Activated CD8-positive, alpha-beta T cell treated with anti-CD3 and anti-CD28 coated beads for 36 hours (primary cell): ENCODE measurements at regions of chr7 and their contacts with region 1.

Region 1: DNA sequence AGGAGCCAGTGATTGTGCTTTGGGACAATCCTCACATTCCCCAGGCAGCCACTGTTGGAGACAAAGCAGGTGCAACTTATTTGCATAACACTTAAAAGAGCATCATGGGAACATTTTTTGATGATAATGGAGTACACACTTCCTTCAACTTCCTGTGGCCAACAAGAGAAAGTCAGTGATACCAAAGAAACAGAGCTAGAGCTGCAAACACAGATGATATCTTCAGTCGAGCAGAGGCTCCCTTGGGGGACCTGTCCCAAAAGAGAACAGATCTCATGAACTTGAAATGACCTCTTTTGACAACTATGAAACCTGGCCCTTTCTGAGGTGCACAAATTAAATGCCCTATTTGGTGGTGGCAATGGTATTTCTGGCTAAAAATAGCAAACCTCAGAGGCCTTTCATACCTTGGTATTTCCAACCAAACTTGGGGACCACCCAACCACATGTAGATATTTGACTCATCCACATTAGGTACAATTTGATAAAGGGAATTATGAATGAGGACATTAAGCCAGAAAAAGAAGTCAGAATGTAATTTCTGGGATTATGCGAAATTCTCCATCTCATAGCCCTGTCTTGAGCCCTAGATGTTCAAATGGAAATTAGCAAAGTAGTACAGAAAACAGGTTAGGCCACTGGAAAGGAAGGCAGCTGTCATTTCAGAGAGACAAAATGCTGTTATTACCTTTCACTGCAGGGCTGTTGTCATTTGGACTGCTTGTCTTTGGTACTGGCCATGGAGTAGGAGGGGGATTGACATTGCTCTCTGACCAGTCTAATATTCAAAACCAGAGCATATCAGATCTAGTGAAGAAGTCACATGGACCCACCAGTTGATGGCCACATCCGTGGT is 146.2 kb downstream of the ICA1 start:
- DNase-seq: peak; percentile 59
- ATAC-seq: peak; percentile 86
- H3K4me3 Mint-ChIP-seq: no peak overlapping the region
- H3K27ac Mint-ChIP-seq: peak overlapping the region; percentile 77
- H3K4me1 Mint-ChIP-seq: peaks cover 54% of the 10 kb centered on the region
- H3K27me3 Mint-ChIP-seq: no peaks in the 10 kb centered on the region
- CTCF ChIP-seq: no peak

Region 2: DNA sequence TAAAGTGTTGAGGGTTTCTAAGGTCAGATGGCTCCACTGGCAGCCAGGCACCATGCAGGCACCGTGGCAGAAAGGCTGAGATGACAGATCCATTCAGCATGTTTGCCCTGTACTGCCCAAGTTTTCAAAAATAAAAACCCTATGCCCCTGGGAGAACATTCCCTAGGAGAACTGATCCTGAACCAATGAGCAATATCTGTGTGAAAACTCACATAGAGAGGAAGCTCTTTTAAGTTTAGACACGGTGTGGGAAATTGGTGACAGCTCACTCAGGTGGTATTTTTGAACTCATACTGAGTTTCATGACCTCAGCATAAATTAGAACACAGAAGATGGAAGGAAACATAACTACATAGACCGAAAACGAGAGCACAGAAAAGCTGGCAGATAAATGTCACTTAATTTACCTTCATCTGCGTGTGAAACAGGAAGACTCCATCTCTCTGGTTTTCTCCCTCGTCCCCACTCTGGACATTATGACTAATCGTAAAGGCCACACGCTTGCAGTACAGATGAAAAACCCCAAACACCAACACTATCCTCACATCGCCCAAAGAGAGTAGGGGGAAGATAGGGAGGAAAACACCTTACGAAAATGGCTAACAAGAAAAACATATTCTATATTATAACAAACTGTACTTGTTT is 18.4 kb after region 1 on chr7:
- CTCF ChIA-PET with region 1: no interaction called
- POLR2A ChIA-PET with region 1: interaction called, 10 read pairs
- intact Hi-C with region 1: loop called (anchors 2 kb)
- DNase-seq: peak; percentile 75
- ATAC-seq: peak; percentile 76
- H3K4me3 Mint-ChIP-seq: peak overlapping the region; percentile 1
- H3K27ac Mint-ChIP-seq: peak overlapping the region; percentile 77
- H3K4me1 Mint-ChIP-seq: peaks cover 56% of the 10 kb centered on the region
- H3K27me3 Mint-ChIP-seq: no peaks in the 10 kb centered on the region
- CTCF ChIP-seq: no peak